IMR-90 (cell line): ENCODE measurements at regions of chr5 and their contacts with region 1.

Region 1: DNA sequence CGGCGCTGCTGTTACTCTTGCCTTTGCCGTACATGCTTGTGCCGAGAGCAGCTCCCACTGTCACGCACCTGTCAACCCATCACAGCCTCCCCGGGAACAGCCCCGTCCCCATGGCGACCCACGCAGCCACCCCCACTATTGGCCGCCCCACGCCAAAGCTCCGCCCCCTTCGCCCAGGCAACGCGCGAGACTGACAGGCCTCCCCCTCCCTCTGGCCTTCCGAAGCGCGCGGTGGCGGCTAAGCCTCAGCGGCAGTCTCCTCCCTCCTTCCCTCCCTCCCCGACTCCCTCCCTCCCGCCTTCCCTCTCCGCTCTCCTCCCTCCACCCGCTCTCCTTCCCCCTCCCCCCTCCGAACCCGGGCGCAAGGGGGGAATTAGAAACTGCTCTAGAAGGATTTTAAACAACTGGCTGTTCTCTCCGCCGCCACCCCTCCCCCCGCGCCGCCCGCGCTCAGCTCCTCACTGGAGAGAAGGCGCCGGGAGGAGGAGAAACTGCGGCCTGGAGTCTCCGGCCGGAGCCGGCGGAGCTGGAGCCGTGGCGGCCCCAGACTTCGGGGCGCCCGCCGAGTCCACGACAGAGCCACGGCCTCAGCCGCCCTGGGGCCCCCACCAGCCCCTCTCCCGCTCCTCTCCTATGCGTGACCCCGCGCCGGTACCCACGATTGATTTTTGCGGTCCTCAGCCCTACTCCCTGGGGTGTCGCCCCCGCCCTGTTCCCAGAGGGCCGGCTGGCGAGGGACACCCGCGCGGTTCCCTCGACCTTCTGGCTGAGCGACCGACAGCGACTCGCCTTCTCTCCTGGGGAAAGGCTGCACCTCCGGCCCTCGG is at the start of gene SSBP2:
- DNase-seq: peak; percentile 98
- ATAC-seq: peak; percentile 93
- H3K4me3 ChIP-seq: peak within 1 kb of the TSS; percentile 58
- H3K27ac ChIP-seq: peak within 1 kb of the TSS; percentile 93
- H3K4me1 ChIP-seq: peaks cover 4% of the 10 kb centered on the region
- H3K27me3 ChIP-seq: no peaks in the 10 kb centered on the region
- CTCF ChIP-seq: no peak
- POLR2A ChIP-seq: peak; percentile 60
- RAD21 ChIP-seq: peak; percentile 70
- total RNA-seq, gene SSBP2: 33.6 and 42.7 TPM in 2 replicates

Region 2: DNA sequence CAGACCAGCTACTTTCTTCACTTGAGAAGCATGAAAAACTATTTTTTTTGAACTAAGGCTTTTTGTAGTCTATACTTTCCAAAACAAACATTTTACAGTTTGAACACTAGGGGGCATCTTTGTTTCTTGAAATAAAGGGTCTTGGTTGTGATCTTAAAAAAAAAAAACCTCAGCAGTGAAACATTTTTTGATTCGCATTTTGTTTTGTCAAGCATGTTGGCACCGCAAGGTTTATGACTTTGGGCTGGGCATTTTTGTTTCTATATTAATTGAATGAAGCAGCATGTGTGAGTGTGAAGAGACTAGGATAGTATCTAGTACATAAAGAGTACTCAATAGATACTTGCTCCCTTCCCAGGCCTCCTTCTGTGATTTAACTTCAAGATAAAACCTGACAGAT is 325.7 kb before region 1 on chr5:
- CTCF ChIA-PET with region 1: no interaction called
- POLR2A ChIA-PET with region 1: no interaction called
- dilution Hi-C with region 1: no loop called
- in situ Hi-C with region 1: no loop called
- intact Hi-C with region 1: loop called (anchors 2 kb)
- DNase-seq: peak; percentile 65
- ATAC-seq: no peak
- H3K4me3 ChIP-seq: no peak overlapping the region
- H3K27ac ChIP-seq: peak overlapping the region; percentile 42; the same call in 1 of the 2 replicates
- H3K4me1 ChIP-seq: peaks cover 21% of the 10 kb centered on the region
- H3K27me3 ChIP-seq: no peaks in the 10 kb centered on the region
- CTCF ChIP-seq: peak; percentile 57
- POLR2A ChIP-seq: no peak
- RAD21 ChIP-seq: peak; percentile 61

Region 3: GRCh38 chr5:81626524-81626923 is 124.7 kb before region 1 on chr5:
- CTCF ChIA-PET with region 1: interaction called, 5 read pairs
- POLR2A ChIA-PET with region 1: no interaction called
- dilution Hi-C with region 1: no loop called
- in situ Hi-C with region 1: no loop called
- intact Hi-C with region 1: loop called (anchors 5 kb)
- DNase-seq: peak; percentile 90
- ATAC-seq: peak; percentile 97
- H3K4me3 ChIP-seq: no peak overlapping the region
- H3K27ac ChIP-seq: no peak overlapping the region
- H3K4me1 ChIP-seq: peaks cover 4% of the 10 kb centered on the region; the same call in 1 of the 2 replicates
- H3K27me3 ChIP-seq: no peaks in the 10 kb centered on the region
- CTCF ChIP-seq: no peak
- POLR2A ChIP-seq: no peak
- RAD21 ChIP-seq: 0 out of 2 replicates have a peak, but pooled peaks have one; percentile 2

Region 4: GRCh38 chr5:81766611-81767010 is 15.4 kb after region 1 on chr5:
- CTCF ChIA-PET with region 1: no interaction called
- POLR2A ChIA-PET with region 1: no interaction called
- dilution Hi-C with region 1: no loop called
- in situ Hi-C with region 1: no loop called
- intact Hi-C with region 1: no loop called
- DNase-seq: no peak
- ATAC-seq: no peak
- H3K4me3 ChIP-seq: no peak overlapping the region
- H3K27ac ChIP-seq: no peak overlapping the region
- H3K4me1 ChIP-seq: peaks cover 7% of the 10 kb centered on the region
- H3K27me3 ChIP-seq: no peaks in the 10 kb centered on the region
- CTCF ChIP-seq: no peak
- POLR2A ChIP-seq: no peak
- RAD21 ChIP-seq: no peak

Region 5: GRCh38 chr5:81838307-81838906 is 87.2 kb after region 1 on chr5:
- CTCF ChIA-PET with region 1: interaction called, 10 read pairs
- POLR2A ChIA-PET with region 1: no interaction called
- dilution Hi-C with region 1: no loop called
- in situ Hi-C with region 1: no loop called
- intact Hi-C with region 1: no loop called
- DNase-seq: peak; percentile 49
- ATAC-seq: peak; percentile 77
- H3K4me3 ChIP-seq: no peak overlapping the region
- H3K27ac ChIP-seq: no peak overlapping the region
- H3K4me1 ChIP-seq: no peaks in the 10 kb centered on the region
- H3K27me3 ChIP-seq: no peaks in the 10 kb centered on the region
- CTCF ChIP-seq: peak; percentile 49
- POLR2A ChIP-seq: no peak
- RAD21 ChIP-seq: peak; percentile 61

Region 6: GRCh38 chr5:81971712-81972495 is 220.7 kb after region 1 on chr5 and contains the start of gene ATG10:
- CTCF ChIA-PET with region 1: no interaction called
- POLR2A ChIA-PET with region 1: no interaction called
- dilution Hi-C with region 1: no loop called
- in situ Hi-C with region 1: no loop called
- intact Hi-C with region 1: loop called (anchors 2 kb)
- DNase-seq: peak; percentile 90
- ATAC-seq: peak; percentile 99
- H3K4me3 ChIP-seq: peak within 1 kb of the TSS; percentile 99
- H3K27ac ChIP-seq: peak within 1 kb of the TSS; percentile 98
- H3K4me1 ChIP-seq: no peaks in the 10 kb centered on the region
- H3K27me3 ChIP-seq: no peaks in the 10 kb centered on the region
- CTCF ChIP-seq: no peak
- POLR2A ChIP-seq: peak; percentile 92
- RAD21 ChIP-seq: no peak
- total RNA-seq, gene ATG10: 8.1 and 12.2 TPM in 2 replicates

Region 7: DNA sequence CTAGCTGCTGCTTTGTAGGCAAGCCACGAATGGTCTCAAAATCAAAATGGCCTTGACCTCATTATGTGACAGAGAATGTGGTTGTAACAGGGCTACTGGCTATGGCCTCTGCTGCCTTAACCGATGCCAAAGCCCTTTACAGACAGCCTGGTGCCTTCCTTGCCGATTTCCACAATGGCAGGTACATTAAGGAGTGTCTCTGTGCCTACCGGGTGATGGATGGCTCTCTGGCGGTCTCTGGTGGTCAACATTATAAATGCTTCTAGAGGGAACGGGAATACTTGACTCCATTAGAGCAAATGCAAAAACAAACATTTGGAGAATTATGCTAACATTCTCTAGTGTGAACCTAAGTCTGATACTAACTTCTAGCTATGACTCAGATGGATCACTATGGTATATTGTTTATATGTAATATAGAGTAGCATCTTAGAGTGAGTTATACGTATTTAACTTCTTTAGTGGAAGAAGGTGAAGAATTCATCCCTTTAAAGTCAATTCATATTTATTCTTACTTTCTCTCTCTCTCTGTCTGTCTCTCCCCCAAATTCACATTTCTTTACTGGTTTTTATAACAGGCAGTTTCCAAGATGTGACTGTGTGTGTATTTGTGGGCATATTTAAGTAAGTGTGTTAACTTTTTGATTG is 474.4 kb after region 1 on chr5:
- CTCF ChIA-PET with region 1: no interaction called
- POLR2A ChIA-PET with region 1: no interaction called
- dilution Hi-C with region 1: no loop called
- in situ Hi-C with region 1: no loop called
- intact Hi-C with region 1: loop called (anchors 1 kb)
- DNase-seq: peak; percentile 85
- ATAC-seq: peak; percentile 96
- H3K4me3 ChIP-seq: no peak overlapping the region
- H3K27ac ChIP-seq: no peak overlapping the region; the same call in 1 of the 2 replicates
- H3K4me1 ChIP-seq: peaks cover 2% of the 10 kb centered on the region; the same call in 1 of the 2 replicates
- H3K27me3 ChIP-seq: no peaks in the 10 kb centered on the region
- CTCF ChIP-seq: peak; percentile 93
- POLR2A ChIP-seq: no peak
- RAD21 ChIP-seq: peak; percentile 89